ENCODE measurements at regions of chr3 and their contacts with region 1.

Region 1: DNA sequence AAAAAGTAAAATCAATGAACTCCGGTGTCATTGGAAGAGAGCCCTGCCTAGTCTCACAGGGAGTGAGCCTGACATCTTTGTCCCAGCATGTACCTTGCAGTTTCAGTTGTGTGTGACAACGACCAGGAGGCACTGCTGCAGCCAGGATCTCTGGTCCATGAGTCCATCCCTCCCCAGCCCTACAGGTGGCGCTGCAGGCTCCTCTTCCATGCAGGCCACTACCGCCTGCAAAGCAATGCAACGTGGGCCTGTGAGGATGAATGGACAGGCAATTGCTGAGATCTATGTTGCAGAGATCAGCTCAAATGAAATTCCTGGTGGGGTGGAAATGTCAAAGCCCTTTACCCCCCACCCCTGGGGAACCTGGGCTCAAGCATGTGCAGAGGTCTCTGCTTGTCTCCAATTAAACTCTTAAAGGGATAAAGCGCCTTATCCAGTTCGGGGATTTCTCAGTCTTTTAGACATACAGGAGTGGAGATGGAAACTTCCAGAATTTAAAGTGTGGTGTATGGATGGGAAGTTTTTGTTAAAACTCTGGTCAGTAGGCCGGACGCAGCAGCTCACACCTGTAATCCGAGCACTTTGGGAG is 35.8 kb downstream of the TKT start:
- DNase-seq: peak; percentile 73 to 85 (median 80)
- ATAC-seq: peak; percentile 95
- H3K4me3 ChIP-seq: no peak overlapping the region
- H3K27ac ChIP-seq: no peak overlapping the region
- H3K4me1 ChIP-seq: 0 out of 5 replicates have a peak, but pooled peaks cover 0 to 3% of the 10 kb centered on the region in 2 experiments
- H3K27me3 ChIP-seq: no peaks in the 10 kb centered on the region
- CTCF ChIP-seq: peak; percentile 89 to 95 (median 90)
- EP300 ChIP-seq: no peak
- POLR2A ChIP-seq: no peak
- RAD21 ChIP-seq: peak; percentile 67 to 80

Region 2: DNA sequence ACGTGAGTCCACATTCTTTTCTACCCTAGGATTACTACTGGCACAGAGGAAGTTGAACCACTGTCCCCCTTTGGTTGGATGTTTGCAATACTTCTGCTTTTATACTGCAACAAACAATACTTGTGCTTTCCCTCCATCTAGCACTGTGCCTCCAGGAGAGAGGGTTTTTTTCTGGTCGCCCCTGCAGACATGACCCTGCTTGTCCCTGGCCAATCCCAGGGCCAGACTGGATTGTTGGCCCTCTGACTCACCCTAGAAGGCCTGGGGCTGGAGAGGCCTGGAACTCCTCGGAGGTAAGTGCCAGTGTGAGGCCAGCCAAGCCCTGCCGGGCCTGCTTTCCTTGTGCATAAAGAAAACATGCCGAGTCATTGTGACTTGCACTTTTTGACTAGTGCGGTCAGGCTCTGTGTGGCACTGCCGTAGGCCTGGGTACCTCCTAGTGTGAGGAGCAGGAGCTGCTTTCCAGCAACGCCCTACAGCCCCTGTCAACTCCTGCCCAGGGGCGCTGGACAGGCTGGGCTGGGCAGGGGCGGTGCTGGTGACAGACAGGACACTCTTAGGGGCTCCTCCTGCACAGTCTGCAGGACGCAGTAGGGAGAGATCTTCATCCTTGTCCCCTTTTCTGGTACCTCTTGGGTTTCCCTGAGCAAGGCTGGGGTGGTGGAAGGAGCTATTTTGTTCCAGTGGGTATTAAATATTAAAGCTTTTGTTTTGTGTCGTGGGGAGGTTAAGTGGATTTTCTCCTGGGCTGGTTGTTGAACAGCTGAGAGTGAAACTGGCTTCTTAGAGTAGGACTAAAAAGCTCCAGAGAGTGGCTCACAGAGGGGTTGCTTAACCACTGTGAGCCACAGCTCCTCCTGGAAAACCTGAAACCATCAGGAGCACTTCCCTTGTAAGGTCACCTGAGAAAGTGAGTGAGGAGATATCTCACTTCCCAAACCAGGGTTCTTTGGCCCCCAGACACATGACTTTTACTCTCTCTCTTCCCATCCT is 50.2 kb after region 1 on chr3:
- CTCF ChIA-PET with region 1: no interaction called
- POLR2A ChIA-PET with region 1: interaction called, 3 read pairs
- in situ Hi-C with region 1: no loop called
- intact Hi-C with region 1: loop called (anchors 10 kb)
- DNase-seq: peak; percentile 73 to 94 (median 78)
- ATAC-seq: peak; percentile 98
- H3K4me3 ChIP-seq: peak overlapping the region; percentile 12; the same call in 1 of the 2 replicates
- H3K27ac ChIP-seq: peak overlapping the region; percentile 93
- H3K4me1 ChIP-seq: peaks cover 12 to 19% of the 10 kb centered on the region in 2 experiments
- H3K27me3 ChIP-seq: no peaks in the 10 kb centered on the region
- CTCF ChIP-seq: peak in 1 of 3 experiments; percentile 8; a peak in 1 of 6 replicates
- EP300 ChIP-seq: peak; percentile 42; the same call in 1 of the 2 replicates
- POLR2A ChIP-seq: peak; percentile 63
- RAD21 ChIP-seq: 0 out of 4 replicates have a peak, but pooled peaks of 1 of the 2 experiments have one; percentile 10

Region 3: GRCh38 chr3:53303957-53304356 is 84.0 kb after region 1 on chr3:
- CTCF ChIA-PET with region 1: no interaction called
- POLR2A ChIA-PET with region 1: no interaction called
- in situ Hi-C with region 1: no loop called
- intact Hi-C with region 1: loop called (anchors 2 kb)
- DNase-seq: no peak
- ATAC-seq: no peak
- H3K4me3 ChIP-seq: no peak overlapping the region
- H3K27ac ChIP-seq: no peak overlapping the region
- H3K4me1 ChIP-seq: no peaks in the 10 kb centered on the region
- H3K27me3 ChIP-seq: no peaks in the 10 kb centered on the region
- CTCF ChIP-seq: no peak
- EP300 ChIP-seq: no peak
- POLR2A ChIP-seq: no peak
- RAD21 ChIP-seq: no peak

Region 4: DNA sequence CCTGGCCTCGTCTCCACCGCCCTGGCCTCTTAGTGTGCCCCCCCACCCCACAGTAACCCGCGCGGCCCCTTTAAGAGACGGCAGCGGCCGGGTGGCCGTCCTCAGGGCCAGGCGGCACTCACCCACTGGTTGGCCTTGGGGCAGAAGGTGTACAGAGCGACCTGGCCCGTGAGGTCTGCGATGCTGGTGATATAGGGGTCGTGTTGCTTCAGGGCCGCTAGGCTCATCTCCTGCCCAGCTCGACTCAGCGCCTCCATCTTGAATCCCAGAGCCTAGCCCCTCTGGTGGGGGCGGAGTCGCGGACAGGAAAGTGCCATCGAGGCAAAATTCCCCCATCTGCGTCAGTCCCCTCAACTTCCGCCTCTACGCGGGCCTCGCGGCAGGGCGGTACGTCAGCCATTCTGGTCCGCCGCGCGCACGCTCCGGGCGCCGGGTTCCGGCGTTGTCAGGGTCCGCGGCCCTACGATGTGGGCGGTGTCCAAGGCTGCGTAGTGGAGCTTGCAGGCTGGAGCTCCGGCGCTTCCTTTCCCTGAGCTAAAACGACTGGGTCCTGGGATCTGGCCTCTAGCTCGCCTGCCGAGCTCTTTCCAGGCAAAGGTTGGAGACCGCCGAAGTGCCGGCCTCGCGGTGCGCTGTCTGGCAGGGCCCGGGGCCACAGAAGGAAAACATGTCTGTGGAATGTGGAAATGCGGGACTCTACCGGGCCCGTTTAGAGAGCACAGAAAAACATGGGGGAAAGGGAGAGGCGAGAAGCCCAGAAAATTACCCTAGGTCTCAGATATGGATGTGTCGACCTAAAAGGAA is 127.5 kb after region 1 on chr3 and contains the start of gene DCP1A:
- CTCF ChIA-PET with region 1: interaction called, 10 read pairs
- POLR2A ChIA-PET with region 1: no interaction called
- in situ Hi-C with region 1: no loop called
- intact Hi-C with region 1: loop called (anchors 1 kb)
- DNase-seq: peak; percentile 80 to 94 (median 86)
- ATAC-seq: peak; percentile 96
- H3K4me3 ChIP-seq: peak within 1 kb of the TSS; percentile 73
- H3K27ac ChIP-seq: peak within 1 kb of the TSS; percentile 86
- H3K4me1 ChIP-seq: peaks cover 7 to 9% of the 10 kb centered on the region in 2 experiments; a peak in 4 of 5 replicates
- H3K27me3 ChIP-seq: no peaks in the 10 kb centered on the region
- CTCF ChIP-seq: 0 out of 6 replicates have a peak, but pooled peaks of 1 of the 3 experiments have one; percentile 1
- EP300 ChIP-seq: peak; percentile 56; the same call in 1 of the 2 replicates
- POLR2A ChIP-seq: peak; percentile 95
- RAD21 ChIP-seq: no peak; a peak in 1 of 4 replicates
- polyA plus RNA-seq, gene DCP1A: 29.2 to 33.7 TPM

Measured in K562 (cell line).